Sigmoid colon (tissue), 7 donors: ENCODE measurements at regions of chr5 and their contacts with region 1.

Region 1: GRCh38 chr5:36728697-36729543 is 122.5 kb downstream of the SLC1A3 start:
- DNase-seq: no peak
- H3K4me3 ChIP-seq: no peak overlapping the region
- H3K27ac ChIP-seq: no peak overlapping the region
- H3K4me1 ChIP-seq: peaks cover 0 to 5% (median 2%) of the 10 kb centered on the region in 4 donors
- H3K27me3 ChIP-seq: no peaks in the 10 kb centered on the region
- CTCF ChIP-seq: peak in 3 of 4 experiments; percentile 26 to 75 (median 41)
- EP300 ChIP-seq: no peak
- POLR2A ChIP-seq: no peak

Region 2: GRCh38 chr5:36870399-36871040 is 141.6 kb after region 1 on chr5:
- intact Hi-C with region 1: loop called (anchors 2 kb)
- DNase-seq: no peak
- H3K4me3 ChIP-seq: no peak overlapping the region
- H3K27ac ChIP-seq: no peak overlapping the region
- H3K4me1 ChIP-seq: peaks cover 0 to 21% (median 17%) of the 10 kb centered on the region in 4 donors
- H3K27me3 ChIP-seq: no peaks in the 10 kb centered on the region
- CTCF ChIP-seq: peak in 3 of 4 experiments; percentile 41 to 61 (median 58)
- EP300 ChIP-seq: no peak
- POLR2A ChIP-seq: no peak